AG04450 (cell line): ENCODE measurements at regions of chr1 and their contacts with region 1.

Region 1: DNA sequence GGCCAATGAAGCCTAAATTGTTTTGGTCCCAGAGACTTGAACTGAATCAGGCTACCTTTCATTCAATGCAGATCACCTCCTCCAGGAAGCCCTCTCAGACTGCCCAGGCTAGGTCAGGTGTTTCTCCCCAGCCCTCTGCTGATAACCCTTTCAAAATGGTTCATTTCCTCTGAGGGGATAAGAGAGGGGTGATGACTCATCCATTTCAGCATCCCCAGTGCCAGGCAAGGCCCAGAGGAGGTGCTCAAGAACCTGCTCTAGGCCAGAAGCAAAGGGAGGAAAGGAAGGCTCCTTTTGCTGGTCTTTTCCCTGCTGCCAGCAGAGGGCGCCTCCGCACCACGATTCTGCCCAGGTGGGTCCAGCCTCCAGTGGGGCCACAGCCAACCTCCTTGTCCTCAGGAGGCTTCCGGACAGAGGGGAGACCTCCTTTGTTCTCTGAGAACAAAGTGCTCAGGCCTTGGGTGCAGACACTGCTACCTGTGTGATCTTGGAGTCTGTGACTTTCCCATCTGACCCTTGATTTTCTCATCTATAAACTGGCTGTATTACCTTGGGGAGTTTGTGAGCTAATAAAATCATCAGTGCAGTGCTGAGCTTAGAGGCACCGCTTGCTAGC is 45.3 kb upstream of the ARHGEF10L start:
- DNase-seq: peak; percentile 20
- H3K4me3 ChIP-seq: no peak overlapping the region
- H3K27ac ChIP-seq: no peak overlapping the region
- H3K27me3 ChIP-seq: peaks cover 9% of the 10 kb centered on the region
- CTCF ChIP-seq: peak; percentile 95

Region 2: GRCh38 chr1:16984717-16985116 is 509.5 kb before region 1 on chr1:
- CTCF ChIA-PET with region 1: no interaction called
- POLR2A ChIA-PET with region 1: no interaction called
- DNase-seq: peak; percentile 53
- H3K4me3 ChIP-seq: no peak overlapping the region
- H3K27ac ChIP-seq: peak overlapping the region; percentile 57
- H3K27me3 ChIP-seq: no peaks in the 10 kb centered on the region
- CTCF ChIP-seq: no peak

Region 3: GRCh38 chr1:17274186-17275170 is 219.7 kb before region 1 on chr1:
- CTCF ChIA-PET with region 1: no interaction called
- POLR2A ChIA-PET with region 1: no interaction called
- DNase-seq: no peak
- H3K4me3 ChIP-seq: no peak overlapping the region
- H3K27ac ChIP-seq: no peak overlapping the region
- H3K27me3 ChIP-seq: peaks cover 5% of the 10 kb centered on the region
- CTCF ChIP-seq: peak; percentile 68

Region 4: GRCh38 chr1:17460245-17460644 is 34.0 kb before region 1 on chr1:
- CTCF ChIA-PET with region 1: interaction called, 10 read pairs
- POLR2A ChIA-PET with region 1: no interaction called
- DNase-seq: no peak
- H3K4me3 ChIP-seq: no peak overlapping the region
- H3K27ac ChIP-seq: no peak overlapping the region
- H3K27me3 ChIP-seq: no peaks in the 10 kb centered on the region
- CTCF ChIP-seq: no peak

Region 5: GRCh38 chr1:17611975-17612374 is 117.8 kb after region 1 on chr1:
- CTCF ChIA-PET with region 1: interaction called, 299 read pairs
- POLR2A ChIA-PET with region 1: interaction called, 4 read pairs
- DNase-seq: no peak
- H3K4me3 ChIP-seq: no peak overlapping the region
- H3K27ac ChIP-seq: no peak overlapping the region
- H3K27me3 ChIP-seq: no peaks in the 10 kb centered on the region
- CTCF ChIP-seq: no peak

Region 6: GRCh38 chr1:17617787-17618557 is 123.8 kb after region 1 on chr1:
- CTCF ChIA-PET with region 1: interaction called, 299 read pairs
- POLR2A ChIA-PET with region 1: interaction called, 3 read pairs
- DNase-seq: no peak
- H3K4me3 ChIP-seq: peak overlapping the region; percentile 55
- H3K27ac ChIP-seq: peak overlapping the region; percentile 52
- H3K27me3 ChIP-seq: no peaks in the 10 kb centered on the region
- CTCF ChIP-seq: no peak

Region 7: GRCh38 chr1:17633654-17634053 is 139.4 kb after region 1 on chr1:
- CTCF ChIA-PET with region 1: interaction called, 13 read pairs
- POLR2A ChIA-PET with region 1: no interaction called
- DNase-seq: peak; percentile 32
- H3K4me3 ChIP-seq: no peak overlapping the region
- H3K27ac ChIP-seq: peak overlapping the region; percentile 39
- H3K27me3 ChIP-seq: no peaks in the 10 kb centered on the region
- CTCF ChIP-seq: no peak